Heart left ventricle (tissue), 16 donors: ENCODE measurements at regions of chr4 and their contacts with region 1.

Region 1: DNA sequence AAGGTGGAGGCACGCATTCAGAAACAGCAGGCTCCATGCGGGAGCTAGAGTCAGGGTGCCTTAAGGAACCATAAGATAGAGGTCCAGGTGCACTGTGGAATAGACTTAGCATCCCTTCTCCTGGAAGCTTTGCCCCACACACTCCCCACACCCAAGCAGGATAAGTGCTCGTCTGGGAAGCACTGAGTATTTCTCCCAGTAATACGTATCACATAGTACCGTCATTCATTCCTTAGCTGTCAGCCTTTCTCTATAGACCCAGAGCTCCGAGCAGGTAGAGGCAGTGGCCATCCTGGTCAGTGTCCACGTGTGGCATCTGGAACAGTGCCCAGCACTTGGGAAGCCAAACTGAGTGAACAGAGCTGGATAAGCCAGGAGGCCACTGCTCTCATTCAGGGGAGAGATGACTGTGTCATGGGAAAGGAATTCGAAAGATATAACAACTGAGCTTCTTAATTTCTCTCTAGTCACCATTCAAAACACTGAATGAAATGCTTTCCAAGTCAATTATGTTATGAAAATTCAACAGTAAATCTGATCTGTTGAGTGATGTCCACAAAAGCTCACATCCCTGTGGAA is 9.9 kb downstream of the APBB2 start:
- DNase-seq: peak; percentile 47 to 69 (median 55)
- ATAC-seq: peak; percentile 70 to 84 (median 77)
- H3K4me3 ChIP-seq: peak overlapping the region in 1 of 12 donors; percentile 1
- H3K27ac ChIP-seq: peak overlapping the region in 10 of 12 donors; percentile 3 to 74 (median 40)
- H3K4me1 ChIP-seq: peaks cover 0 to 92% (median 46%) of the 10 kb centered on the region in 12 donors
- H3K27me3 ChIP-seq: no peaks in the 10 kb centered on the region
- CTCF ChIP-seq: no peak
- POLR2A ChIP-seq: no peak

Region 2: GRCh38 chr4:41143311-41144039 is 61.0 kb before region 1 on chr4:
- intact Hi-C with region 1: loop called in 4 of 10 experiments (anchors 5 to 10 kb)
- DNase-seq: peak in 4 of 5 donors; percentile 40 to 63 (median 56)
- ATAC-seq: peak; percentile 62 to 87 (median 82)
- H3K4me3 ChIP-seq: peak overlapping the region in 4 of 12 donors; percentile 8 to 32 (median 24)
- H3K27ac ChIP-seq: peak overlapping the region; percentile 56 to 89 (median 72)
- H3K4me1 ChIP-seq: peaks cover 0 to 65% (median 36%) of the 10 kb centered on the region in 12 donors
- H3K27me3 ChIP-seq: no peaks in the 10 kb centered on the region
- CTCF ChIP-seq: no peak
- POLR2A ChIP-seq: no peak

Region 3: GRCh38 chr4:41160012-41160789 is 44.3 kb before region 1 on chr4:
- intact Hi-C with region 1: loop called in 2 of 10 experiments (anchors 5 kb)
- DNase-seq: peak in 1 of 5 donors; percentile 63
- ATAC-seq: peak in 3 of 4 donors; percentile 72 to 76 (median 74)
- H3K4me3 ChIP-seq: no peak overlapping the region
- H3K27ac ChIP-seq: peak overlapping the region in 5 of 12 donors; percentile 1 to 50 (median 22)
- H3K4me1 ChIP-seq: peaks cover 0 to 41% (median 13%) of the 10 kb centered on the region in 12 donors
- H3K27me3 ChIP-seq: no peaks in the 10 kb centered on the region
- CTCF ChIP-seq: no peak
- POLR2A ChIP-seq: no peak